ENCODE measurements at regions of chr22 and their contacts with region 1.

Region 1: GRCh38 chr22:32985899-32986765 is 72.0 kb downstream of the SYN3 start:
- DNase-seq: peak in 1 of 2 donors; percentile 69
- ATAC-seq: peak; percentile 95
- H3K4me3 ChIP-seq: no peak overlapping the region
- H3K27ac ChIP-seq: no peak overlapping the region
- H3K4me1 ChIP-seq: no peaks in the 10 kb centered on the region
- H3K27me3 ChIP-seq: no peaks in the 10 kb centered on the region

Region 2: DNA sequence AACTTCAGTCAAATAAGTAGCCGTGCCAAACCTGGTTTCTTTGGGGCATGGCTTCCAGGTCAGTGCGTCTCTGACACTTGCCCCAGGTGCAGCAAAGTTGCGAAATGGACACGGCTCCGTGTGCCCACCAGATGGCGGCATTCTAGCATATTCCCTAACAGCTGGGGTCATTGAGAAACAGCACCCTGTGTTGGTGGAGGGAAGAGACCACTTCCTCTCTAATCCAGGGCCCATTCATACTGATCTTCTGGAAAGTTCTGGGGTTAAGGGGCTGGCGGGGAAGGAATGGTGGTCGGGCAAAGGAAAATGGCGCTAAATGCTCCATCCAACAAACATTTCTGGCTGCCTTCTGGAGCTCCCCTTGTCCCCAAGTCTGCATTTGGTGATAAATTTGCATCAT is 325.8 kb before region 1 on chr22:
- intact Hi-C with region 1: loop called (anchors 2 kb)
- DNase-seq: peak; percentile 76 to 83
- ATAC-seq: peak; percentile 77
- H3K4me3 ChIP-seq: no peak overlapping the region
- H3K27ac ChIP-seq: no peak overlapping the region
- H3K4me1 ChIP-seq: no peaks in the 10 kb centered on the region
- H3K27me3 ChIP-seq: no peaks in the 10 kb centered on the region

Region 3: GRCh38 chr22:32723643-32724042 is 262.5 kb before region 1 on chr22:
- intact Hi-C with region 1: no loop called
- DNase-seq: peak; percentile 87 to 94
- ATAC-seq: peak; percentile 78
- H3K4me3 ChIP-seq: no peak overlapping the region
- H3K27ac ChIP-seq: peak overlapping the region in 1 of 2 donors; percentile 74
- H3K4me1 ChIP-seq: peaks cover 0 to 1% of the 10 kb centered on the region in 2 donors
- H3K27me3 ChIP-seq: no peaks in the 10 kb centered on the region

Region 4: GRCh38 chr22:32775957-32776356 is 210.2 kb before region 1 on chr22:
- intact Hi-C with region 1: loop called in 1 of 2 experiments (anchors 5 kb)
- DNase-seq: no peak
- ATAC-seq: no peak
- H3K4me3 ChIP-seq: no peak overlapping the region
- H3K27ac ChIP-seq: no peak overlapping the region
- H3K4me1 ChIP-seq: no peaks in the 10 kb centered on the region
- H3K27me3 ChIP-seq: no peaks in the 10 kb centered on the region

Region 5: GRCh38 chr22:32932176-32932575 is 54.0 kb before region 1 on chr22:
- intact Hi-C with region 1: no loop called
- DNase-seq: no peak
- ATAC-seq: no peak
- H3K4me3 ChIP-seq: no peak overlapping the region
- H3K27ac ChIP-seq: no peak overlapping the region
- H3K4me1 ChIP-seq: no peaks in the 10 kb centered on the region
- H3K27me3 ChIP-seq: peaks cover 0 to 1% of the 10 kb centered on the region in 2 donors

Region 6: DNA sequence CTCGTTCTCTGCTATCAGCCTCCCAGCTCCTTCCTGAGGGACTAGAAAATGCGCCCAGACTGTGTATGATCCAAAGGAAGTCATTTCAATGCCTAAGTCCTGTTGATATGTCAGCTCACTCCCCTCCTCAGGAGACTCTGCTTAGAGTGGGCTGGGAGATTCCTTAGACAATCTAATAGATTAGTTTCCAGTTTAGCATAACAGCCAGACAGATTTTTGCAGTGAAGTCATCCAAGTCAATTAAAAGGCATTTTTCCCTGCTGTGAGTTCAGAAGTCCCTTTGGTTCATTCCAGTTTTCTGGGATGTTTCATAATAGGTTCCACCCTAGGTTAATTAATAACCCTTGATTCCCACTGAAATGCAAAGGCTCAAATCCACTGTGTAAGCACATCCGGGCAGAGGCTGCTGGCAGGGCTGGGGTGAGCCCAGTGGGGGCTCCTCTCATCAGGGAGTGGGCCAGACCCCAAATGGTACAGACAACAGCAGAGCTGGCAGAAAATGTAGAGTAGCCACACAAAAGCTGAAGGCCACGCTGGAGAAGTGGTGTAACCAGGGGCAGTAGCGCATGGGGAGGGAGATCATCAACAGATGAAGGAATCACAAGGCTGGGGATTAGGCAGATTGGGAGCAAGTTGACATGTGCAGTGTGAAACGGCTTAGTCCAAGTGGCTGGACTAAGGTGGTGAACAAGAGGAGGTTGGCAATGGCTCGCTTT is 18.6 kb before region 1 on chr22:
- intact Hi-C with region 1: loop called in 1 of 2 experiments (anchors 2 kb)
- DNase-seq: no peak
- ATAC-seq: peak; percentile 26
- H3K4me3 ChIP-seq: no peak overlapping the region
- H3K27ac ChIP-seq: no peak overlapping the region
- H3K4me1 ChIP-seq: peaks cover 0 to 3% of the 10 kb centered on the region in 2 donors
- H3K27me3 ChIP-seq: peaks cover 0 to 2% of the 10 kb centered on the region in 2 donors